HEK293 (cell line): ENCODE measurements at regions of chr4 and their contacts with region 1.

Region 1: DNA sequence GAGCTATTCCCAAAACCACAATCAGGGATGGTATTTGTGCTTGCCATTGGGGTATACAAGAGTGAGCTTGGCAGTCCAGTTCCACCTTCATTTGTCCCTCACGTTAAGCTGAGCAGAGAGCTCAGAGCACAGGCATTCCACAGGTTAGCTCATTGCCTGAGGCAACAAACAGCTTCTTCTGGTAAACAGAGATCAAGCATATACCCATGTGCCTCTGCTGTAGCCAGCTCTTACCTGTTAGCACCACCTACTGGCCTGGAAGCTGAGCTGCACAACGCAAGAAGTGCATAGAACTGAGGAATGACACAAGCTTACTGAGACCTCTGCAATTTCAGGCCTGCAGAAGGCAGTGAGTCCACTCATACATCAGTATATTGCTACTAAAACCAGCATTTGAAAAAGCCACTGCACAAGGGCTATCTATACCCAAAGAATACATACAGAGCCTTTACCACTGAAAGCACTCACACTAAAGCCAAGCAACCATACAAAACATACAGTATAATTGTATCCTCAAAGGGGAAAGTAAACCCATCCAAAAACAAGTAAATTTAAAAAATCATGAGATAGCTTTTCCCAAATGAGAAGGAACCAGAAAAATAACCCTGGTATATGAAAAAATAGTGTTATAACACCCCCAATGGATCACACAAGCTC is 258.3 kb upstream of the GABRA2 start:
- H3K4me3 ChIP-seq: no peak overlapping the region
- H3K27ac ChIP-seq: no peak overlapping the region
- H3K4me1 ChIP-seq: no peaks in the 10 kb centered on the region
- CTCF ChIP-seq: no peak

Region 2: GRCh38 chr4:46329118-46329976 is 318.9 kb before region 1 on chr4:
- CTCF ChIA-PET with region 1: interaction called, 24 read pairs
- POLR2A ChIA-PET with region 1: no interaction called
- H3K4me3 ChIP-seq: no peak overlapping the region
- H3K27ac ChIP-seq: no peak overlapping the region
- H3K4me1 ChIP-seq: no peaks in the 10 kb centered on the region
- CTCF ChIP-seq: no peak